Caco-2 (cell line): ENCODE measurements at regions of chr3 and their contacts with region 1.

Region 1: DNA sequence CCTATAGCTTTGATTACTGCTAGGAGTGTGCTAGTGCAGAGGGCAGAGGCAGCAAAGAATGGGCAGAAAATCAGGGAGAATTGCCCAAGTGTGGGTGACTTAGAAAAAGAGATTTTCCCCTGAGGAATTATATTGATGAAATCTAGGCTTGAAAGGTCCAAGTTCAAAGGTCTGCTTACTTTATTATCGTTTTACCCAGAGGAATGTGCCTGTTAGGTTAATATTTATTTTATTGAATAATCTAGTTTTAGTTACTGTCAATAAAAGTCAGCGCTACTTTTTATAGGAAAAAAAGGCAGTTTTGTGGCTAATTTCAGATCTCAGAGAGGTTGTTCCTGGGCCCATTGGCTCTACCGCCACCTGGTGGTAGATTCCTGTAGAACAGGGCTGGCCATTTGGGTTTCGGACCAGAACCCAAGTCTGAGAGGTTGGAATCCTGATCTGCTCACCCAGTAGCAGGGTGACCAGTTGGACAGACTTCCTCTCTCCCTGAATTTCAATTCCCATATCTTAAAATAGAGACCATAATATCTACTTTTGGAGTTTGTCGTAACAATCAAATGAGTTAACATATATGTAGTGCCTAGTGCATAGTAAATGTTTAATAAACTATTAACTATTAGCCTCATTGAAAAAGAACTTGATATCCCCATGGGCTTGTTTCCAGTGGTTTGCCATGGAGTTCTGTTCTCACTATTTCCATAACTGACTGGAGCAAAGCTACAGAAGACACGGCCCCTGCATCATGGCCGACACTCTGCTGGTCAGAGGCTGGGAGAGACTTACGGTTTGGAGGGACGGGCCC is 62.7 kb upstream of the ZNF148 start:
- DNase-seq: peak; percentile 60 to 72
- H3K4me3 ChIP-seq: no peak overlapping the region
- H3K4me3 Mint-ChIP-seq: no peak overlapping the region
- H3K27ac Mint-ChIP-seq: no peak overlapping the region
- H3K4me1 ChIP-seq: peaks cover 33% of the 10 kb centered on the region
- H3K4me1 Mint-ChIP-seq: peaks cover 20% of the 10 kb centered on the region
- H3K27me3 ChIP-seq: no peaks in the 10 kb centered on the region
- H3K27me3 Mint-ChIP-seq: no peaks in the 10 kb centered on the region
- CTCF ChIP-seq: peak; percentile 89 to 93

Region 2: DNA sequence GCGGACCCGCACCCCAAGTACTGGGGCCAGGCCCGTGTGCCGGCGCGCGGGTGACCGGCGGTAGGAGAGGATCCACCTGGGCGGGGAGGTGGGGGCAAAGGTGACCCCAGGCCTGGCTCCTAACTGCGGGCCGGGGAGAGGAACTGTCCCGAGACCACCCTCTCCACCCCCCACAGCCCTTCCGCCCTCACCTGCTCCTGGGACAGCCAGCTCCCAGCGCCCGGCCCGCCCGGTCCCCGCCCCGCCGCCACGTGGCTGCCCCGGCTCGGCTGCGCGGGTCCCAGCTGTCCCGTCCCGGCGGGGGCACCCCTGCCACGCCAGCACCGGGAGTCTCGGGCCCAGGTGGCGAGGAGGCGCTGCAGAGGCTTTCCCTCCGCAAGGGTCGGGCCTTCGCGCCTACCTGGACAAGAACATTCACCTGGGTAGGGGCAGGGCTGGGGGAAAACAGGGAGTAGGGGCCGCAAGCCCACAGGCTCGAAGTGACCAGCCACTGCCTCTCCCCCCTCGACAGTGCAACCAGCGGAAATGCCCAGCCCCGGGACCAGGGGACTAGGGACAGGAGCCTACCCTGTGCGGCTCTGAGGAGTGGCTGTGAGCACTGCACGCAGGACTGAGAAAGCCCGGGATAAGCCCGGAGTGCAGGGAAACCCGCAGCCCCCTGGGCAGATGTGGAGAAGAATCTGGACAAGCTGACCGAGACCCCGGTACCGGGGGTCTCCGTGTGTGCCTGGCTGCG is 225.2 kb before region 1 on chr3 and contains the start of gene SLC12A8:
- CTCF ChIA-PET with region 1: interaction called, 4 read pairs
- POLR2A ChIA-PET with region 1: no interaction called
- intact Hi-C with region 1: loop called (anchors 10 kb)
- DNase-seq: peak; percentile 58 to 72
- H3K4me3 ChIP-seq: peak within 1 kb of the TSS; percentile 78
- H3K4me3 Mint-ChIP-seq: peak within 1 kb of the TSS; percentile 78
- H3K27ac Mint-ChIP-seq: peak within 1 kb of the TSS; percentile 76
- H3K4me1 ChIP-seq: peaks cover 36% of the 10 kb centered on the region
- H3K4me1 Mint-ChIP-seq: peaks cover 40% of the 10 kb centered on the region
- H3K27me3 ChIP-seq: no peaks in the 10 kb centered on the region
- H3K27me3 Mint-ChIP-seq: no peaks in the 10 kb centered on the region
- CTCF ChIP-seq: no peak
- total RNA-seq, gene SLC12A8: 23.3 and 28.0 TPM in 2 replicates

Region 3: GRCh38 chr3:125406070-125406469 is 31.8 kb before region 1 on chr3:
- CTCF ChIA-PET with region 1: no interaction called
- POLR2A ChIA-PET with region 1: no interaction called
- intact Hi-C with region 1: no loop called
- DNase-seq: no peak
- H3K4me3 ChIP-seq: no peak overlapping the region
- H3K4me3 Mint-ChIP-seq: no peak overlapping the region
- H3K27ac Mint-ChIP-seq: no peak overlapping the region
- H3K4me1 ChIP-seq: peaks cover 7% of the 10 kb centered on the region
- H3K4me1 Mint-ChIP-seq: peaks cover 2% of the 10 kb centered on the region
- H3K27me3 ChIP-seq: no peaks in the 10 kb centered on the region
- H3K27me3 Mint-ChIP-seq: no peaks in the 10 kb centered on the region
- CTCF ChIP-seq: no peak

Region 4: GRCh38 chr3:125418306-125418705 is 19.5 kb before region 1 on chr3:
- CTCF ChIA-PET with region 1: no interaction called
- POLR2A ChIA-PET with region 1: no interaction called
- intact Hi-C with region 1: no loop called
- DNase-seq: no peak
- H3K4me3 ChIP-seq: no peak overlapping the region
- H3K4me3 Mint-ChIP-seq: no peak overlapping the region
- H3K27ac Mint-ChIP-seq: no peak overlapping the region
- H3K4me1 ChIP-seq: no peaks in the 10 kb centered on the region
- H3K4me1 Mint-ChIP-seq: no peaks in the 10 kb centered on the region
- H3K27me3 ChIP-seq: no peaks in the 10 kb centered on the region
- H3K27me3 Mint-ChIP-seq: no peaks in the 10 kb centered on the region
- CTCF ChIP-seq: no peak